Right ventricle myocardium inferior (tissue), 1 donor: ENCODE measurements at regions of chr1 and their contacts with region 1.

Region 1: GRCh38 chr1:176374967-176375569 is 87.9 kb upstream of the PAPPA2 start:
- DNase-seq: peak; percentile 78
- ATAC-seq: peak; percentile 56

Region 2: GRCh38 chr1:175873290-175873935 is 501.7 kb before region 1 on chr1:
- intact Hi-C with region 1: no loop called
- DNase-seq: no peak
- ATAC-seq: no peak

Region 3: DNA sequence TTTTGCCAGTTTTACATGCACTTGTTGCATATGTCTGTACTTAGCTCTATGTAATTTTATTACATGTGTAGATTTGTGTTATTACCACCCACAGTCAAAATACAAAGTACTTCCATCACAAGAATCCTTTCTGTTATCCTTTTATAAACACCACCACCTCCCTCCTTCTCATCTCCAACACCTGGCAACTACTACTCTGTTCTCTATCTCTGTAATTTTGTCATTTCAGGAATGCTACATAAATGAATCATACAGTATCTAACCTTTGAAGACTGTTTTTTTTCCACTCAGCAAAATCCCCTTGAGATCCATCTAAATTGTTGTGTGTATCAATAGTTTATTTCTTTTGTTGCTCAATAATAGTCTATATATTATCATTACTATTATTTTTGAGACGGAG is 103.5 kb before region 1 on chr1:
- intact Hi-C with region 1: no loop called
- DNase-seq: no peak
- ATAC-seq: no peak

Region 4: DNA sequence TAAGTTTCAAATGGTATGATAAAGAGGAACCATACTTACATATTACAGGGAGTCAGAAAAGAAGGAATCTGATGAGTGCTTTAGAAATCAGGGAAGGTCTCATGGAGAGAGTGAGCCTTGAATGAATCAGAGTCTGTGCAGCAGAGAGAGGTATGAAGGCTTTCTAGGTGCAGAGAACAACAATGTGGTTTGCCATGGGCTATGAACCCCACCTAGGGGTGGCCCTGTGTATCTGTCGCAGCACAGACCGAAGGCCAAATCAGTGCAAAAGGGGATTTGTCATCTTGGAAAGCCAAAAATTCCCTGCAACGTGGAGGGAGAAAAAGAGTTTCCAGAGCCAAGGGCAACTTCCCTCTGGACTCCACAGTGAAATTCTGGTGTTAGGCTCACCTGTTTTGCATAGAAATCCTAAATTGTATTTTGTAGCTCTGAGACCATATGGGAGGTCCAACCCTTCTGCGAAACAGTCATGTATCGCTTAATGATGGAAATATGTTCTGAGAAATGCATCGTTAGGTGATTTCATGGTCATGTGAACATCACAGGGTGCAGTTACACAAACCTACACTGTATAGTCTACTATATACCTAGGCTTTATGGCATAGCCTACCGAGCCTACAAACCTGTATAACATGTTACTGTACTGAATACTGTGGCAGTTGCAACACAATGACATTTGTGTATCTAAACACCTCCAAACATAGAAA is 91.6 kb after region 1 on chr1:
- intact Hi-C with region 1: loop called (anchors 5 kb)
- DNase-seq: no peak
- ATAC-seq: peak; percentile 57

Region 5: GRCh38 chr1:176559878-176560277 is 184.8 kb after region 1 on chr1:
- intact Hi-C with region 1: loop called (anchors 2 kb)
- DNase-seq: no peak
- ATAC-seq: peak; percentile 92

Region 6: DNA sequence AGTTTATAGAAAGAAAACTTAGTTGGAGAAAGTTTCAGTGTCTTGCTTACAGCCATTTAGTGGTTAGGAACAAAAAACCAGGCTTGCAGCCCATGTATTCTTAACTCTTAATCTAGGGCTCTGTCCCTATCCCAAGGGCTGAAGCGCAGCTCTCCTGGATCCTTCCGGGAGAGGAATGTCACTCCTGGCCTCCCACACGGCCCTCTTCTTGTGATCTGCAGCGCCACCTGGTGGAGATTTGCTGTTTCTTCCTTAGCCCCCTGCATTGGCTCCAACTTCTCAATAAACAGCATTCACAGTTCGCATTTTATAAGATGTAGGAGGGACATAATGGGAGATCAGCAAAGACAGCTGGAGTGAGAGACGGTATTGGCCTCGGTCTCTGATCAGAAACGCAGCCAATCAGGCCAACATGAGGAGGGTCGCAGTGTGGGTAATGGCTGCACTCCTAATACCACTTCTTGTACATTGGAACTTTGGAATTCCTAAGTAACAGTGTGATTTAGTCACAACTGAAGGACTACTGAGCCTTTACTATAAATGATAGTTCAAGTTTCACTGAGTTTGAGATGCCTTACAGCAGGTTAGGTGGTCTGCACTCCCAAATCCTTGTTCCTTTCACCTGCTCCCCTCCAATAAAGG is 506.0 kb after region 1 on chr1:
- intact Hi-C with region 1: loop called (anchors 2 kb)
- DNase-seq: peak; percentile 68
- ATAC-seq: peak; percentile 69